CD8-positive, alpha-beta T cell (primary cell): ENCODE measurements at regions of chr3 and their contacts with region 1.

Region 1: DNA sequence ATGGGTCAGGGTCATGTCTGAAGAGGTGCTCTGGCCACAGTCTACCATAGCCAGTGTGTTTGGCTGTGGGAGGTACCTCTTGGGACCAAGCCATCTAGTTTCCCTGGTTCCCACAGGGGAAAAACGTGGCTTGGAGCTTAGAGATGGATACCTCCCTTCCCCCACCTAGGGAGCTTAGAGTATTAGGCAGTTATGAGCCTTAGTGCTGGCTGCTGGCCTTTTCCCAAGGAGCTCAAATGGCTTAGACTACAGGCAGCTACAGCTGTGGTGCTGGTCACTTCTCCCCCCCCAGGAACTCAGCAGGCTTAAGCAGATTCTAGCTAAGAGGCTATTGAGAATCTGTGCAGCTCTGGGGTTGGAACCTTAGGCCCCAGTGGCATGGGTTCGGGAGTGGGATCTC is 591.2 kb downstream of the NSUN3 start:
- DNase-seq: no peak
- ATAC-seq: no peak
- H3K4me3 ChIP-seq: no peak overlapping the region
- H3K4me3 Mint-ChIP-seq: no peak overlapping the region
- H3K27ac ChIP-seq: no peak overlapping the region
- H3K27ac Mint-ChIP-seq: no peak overlapping the region
- H3K4me1 ChIP-seq: no peaks in the 10 kb centered on the region
- H3K4me1 Mint-ChIP-seq: no peaks in the 10 kb centered on the region
- H3K27me3 ChIP-seq: no peaks in the 10 kb centered on the region
- H3K27me3 Mint-ChIP-seq: no peaks in the 10 kb centered on the region
- CTCF ChIP-seq: no peak

Region 2: DNA sequence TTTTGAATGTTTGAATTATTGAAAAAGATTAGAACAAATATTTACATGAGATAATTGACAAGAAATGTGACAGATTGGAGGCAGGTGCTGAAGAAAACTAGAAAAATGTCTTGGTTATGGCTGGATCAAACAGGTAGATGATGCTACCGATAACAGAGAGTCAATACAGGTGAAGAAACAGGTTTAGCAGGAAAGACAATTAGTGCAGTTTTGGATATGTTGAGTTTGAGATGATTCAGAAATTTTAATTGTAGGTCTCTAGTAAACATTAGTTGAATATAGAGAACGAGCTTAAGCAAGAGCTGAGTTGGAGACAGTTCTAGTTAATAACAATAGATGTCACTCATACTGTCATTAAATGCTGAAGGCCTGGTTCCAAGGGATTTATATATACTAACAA is 66.8 kb before region 1 on chr3:
- CTCF ChIA-PET with region 1: no interaction called
- POLR2A ChIA-PET with region 1: no interaction called
- intact Hi-C with region 1: no loop called
- DNase-seq: no peak
- ATAC-seq: no peak
- H3K4me3 ChIP-seq: no peak overlapping the region
- H3K4me3 Mint-ChIP-seq: no peak overlapping the region
- H3K27ac ChIP-seq: no peak overlapping the region
- H3K27ac Mint-ChIP-seq: no peak overlapping the region
- H3K4me1 ChIP-seq: no peaks in the 10 kb centered on the region
- H3K4me1 Mint-ChIP-seq: no peaks in the 10 kb centered on the region
- H3K27me3 ChIP-seq: no peaks in the 10 kb centered on the region
- H3K27me3 Mint-ChIP-seq: no peaks in the 10 kb centered on the region
- CTCF ChIP-seq: no peak

Region 3: DNA sequence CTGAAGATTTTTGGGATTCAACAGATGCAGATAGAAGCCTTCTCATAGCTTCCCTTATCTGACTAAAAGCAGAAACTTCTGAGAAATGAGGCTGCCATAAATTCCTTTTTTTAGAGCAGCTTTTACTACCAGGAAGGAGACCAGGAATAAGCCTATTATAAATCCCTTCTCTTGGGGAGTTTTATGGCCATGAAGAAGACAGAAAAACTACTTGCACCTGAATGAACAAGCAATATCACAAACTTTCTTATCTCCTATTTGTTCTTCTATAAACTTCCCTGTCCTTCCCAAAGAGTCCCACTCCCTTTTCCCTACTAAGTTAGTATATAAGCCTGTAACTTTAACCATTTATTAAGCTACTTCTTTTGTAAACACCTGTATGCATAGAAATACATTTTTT is 11.8 kb after region 1 on chr3:
- CTCF ChIA-PET with region 1: no interaction called
- POLR2A ChIA-PET with region 1: no interaction called
- intact Hi-C with region 1: loop called in 1 of 2 experiments (anchors 1 kb)
- DNase-seq: no peak
- ATAC-seq: no peak
- H3K4me3 ChIP-seq: no peak overlapping the region
- H3K4me3 Mint-ChIP-seq: no peak overlapping the region
- H3K27ac ChIP-seq: no peak overlapping the region
- H3K27ac Mint-ChIP-seq: no peak overlapping the region
- H3K4me1 ChIP-seq: no peaks in the 10 kb centered on the region
- H3K4me1 Mint-ChIP-seq: no peaks in the 10 kb centered on the region
- H3K27me3 ChIP-seq: no peaks in the 10 kb centered on the region
- H3K27me3 Mint-ChIP-seq: no peaks in the 10 kb centered on the region
- CTCF ChIP-seq: no peak